Gastrocnemius medialis (tissue), 4 donors: ENCODE measurements at regions of chr2 and their contacts with region 1.

Region 1: GRCh38 chr2:135741395-135742324 is at the start of gene UBXN4:
- DNase-seq: peak; percentile 97 to 99
- ATAC-seq: peak; percentile 86 to 92
- H3K4me3 ChIP-seq: peak within 1 kb of the TSS; percentile 77 to 94 (median 93)
- H3K27ac ChIP-seq: peak within 1 kb of the TSS; percentile 92 to 100 (median 98)
- H3K4me1 ChIP-seq: peaks cover 30 to 38% of the 10 kb centered on the region in 2 donors
- H3K27me3 ChIP-seq: no peaks in the 10 kb centered on the region
- CTCF ChIP-seq: peak in 3 of 5 experiments; percentile 13 to 53 (median 30)
- POLR2A ChIP-seq: peak; percentile 94 to 96
- total RNA-seq, gene UBXN4: 54.8 to 85.1 (median 77.0) TPM

Region 2: GRCh38 chr2:134918526-134919340 is 822.9 kb before region 1 on chr2 and contains the start of gene CCNT2:
- in situ Hi-C with region 1: no loop called
- intact Hi-C with region 1: loop called (anchors 2 kb)
- DNase-seq: peak; percentile 97 to 99
- ATAC-seq: peak; percentile 86 to 89
- H3K4me3 ChIP-seq: peak within 1 kb of the TSS; percentile 96 to 99 (median 96)
- H3K27ac ChIP-seq: peak within 1 kb of the TSS; percentile 99 to 100 (median 100)
- H3K4me1 ChIP-seq: peaks cover 41 to 45% of the 10 kb centered on the region in 2 donors
- H3K27me3 ChIP-seq: no peaks in the 10 kb centered on the region
- CTCF ChIP-seq: peak in 3 of 5 experiments; percentile 22 to 34 (median 22)
- POLR2A ChIP-seq: peak; percentile 17 to 44
- total RNA-seq, gene CCNT2: 11.6 to 28.4 (median 18.6) TPM

Region 3: GRCh38 chr2:135052042-135052876 is 689.4 kb before region 1 on chr2 and contains the start of gene RAB3GAP1:
- in situ Hi-C with region 1: no loop called
- intact Hi-C with region 1: loop called (anchors 5 kb)
- DNase-seq: peak; percentile 53 to 67
- ATAC-seq: peak; percentile 89 to 91
- H3K4me3 ChIP-seq: peak within 1 kb of the TSS; percentile 84 to 92 (median 88)
- H3K27ac ChIP-seq: peak within 1 kb of the TSS; percentile 93 to 98 (median 95)
- H3K4me1 ChIP-seq: peaks cover 28 to 29% of the 10 kb centered on the region in 2 donors
- H3K27me3 ChIP-seq: no peaks in the 10 kb centered on the region
- CTCF ChIP-seq: no peak
- POLR2A ChIP-seq: peak; percentile 45 to 48
- total RNA-seq, gene RAB3GAP1: 44.3 to 51.7 (median 46.5) TPM

Region 4: GRCh38 chr2:135456431-135456830 is 285.2 kb before region 1 on chr2:
- in situ Hi-C with region 1: no loop called
- intact Hi-C with region 1: no loop called
- DNase-seq: no peak
- ATAC-seq: no peak
- H3K4me3 ChIP-seq: no peak overlapping the region
- H3K27ac ChIP-seq: no peak overlapping the region
- H3K4me1 ChIP-seq: no peaks in the 10 kb centered on the region
- H3K27me3 ChIP-seq: no peaks in the 10 kb centered on the region
- CTCF ChIP-seq: no peak
- POLR2A ChIP-seq: no peak

Region 5: DNA sequence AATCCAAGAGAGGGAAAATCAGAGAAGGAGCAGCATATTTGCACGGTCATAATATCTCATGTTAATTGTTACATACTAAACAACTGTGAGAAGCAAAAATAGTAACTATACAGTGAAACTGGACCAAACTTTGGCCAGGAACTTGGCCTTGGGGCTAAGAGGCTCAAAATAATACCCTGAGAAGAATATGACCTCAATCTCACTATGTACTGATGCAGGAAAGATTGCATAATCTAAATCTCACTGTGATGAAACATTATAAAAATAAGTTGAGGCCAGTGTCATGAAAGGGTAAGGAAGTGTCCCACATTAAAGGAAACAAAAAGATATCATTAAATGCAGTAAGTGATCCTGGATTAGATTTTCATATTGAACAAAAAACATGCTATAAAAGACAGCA is 247.2 kb before region 1 on chr2:
- in situ Hi-C with region 1: no loop called
- intact Hi-C with region 1: loop called (anchors 2 kb)
- DNase-seq: peak in 1 of 2 donors; percentile 20
- ATAC-seq: peak; percentile 97 to 99
- H3K4me3 ChIP-seq: no peak overlapping the region
- H3K27ac ChIP-seq: peak overlapping the region; percentile 80 to 89 (median 85)
- H3K4me1 ChIP-seq: peaks cover 10 to 26% of the 10 kb centered on the region in 2 donors
- H3K27me3 ChIP-seq: no peaks in the 10 kb centered on the region
- CTCF ChIP-seq: no peak
- POLR2A ChIP-seq: no peak

Region 6: GRCh38 chr2:135531231-135532228 is 210.1 kb before region 1 on chr2 and contains the start of gene R3HDM1:
- in situ Hi-C with region 1: loop called in 1 of 4 experiments (anchors 10 kb)
- intact Hi-C with region 1: loop called (anchors 2 kb)
- DNase-seq: peak; percentile 100
- ATAC-seq: peak; percentile 90 to 95
- H3K4me3 ChIP-seq: peak within 1 kb of the TSS; percentile 75 to 89 (median 80)
- H3K27ac ChIP-seq: peak within 1 kb of the TSS; percentile 83 to 98 (median 92)
- H3K4me1 ChIP-seq: peaks cover 14 to 25% of the 10 kb centered on the region in 2 donors
- H3K27me3 ChIP-seq: no peaks in the 10 kb centered on the region
- CTCF ChIP-seq: peak in 1 of 5 experiments; percentile 8
- POLR2A ChIP-seq: peak; percentile 48 to 54
- total RNA-seq, gene R3HDM1: 13.5 to 35.7 (median 19.1) TPM

Region 7: DNA sequence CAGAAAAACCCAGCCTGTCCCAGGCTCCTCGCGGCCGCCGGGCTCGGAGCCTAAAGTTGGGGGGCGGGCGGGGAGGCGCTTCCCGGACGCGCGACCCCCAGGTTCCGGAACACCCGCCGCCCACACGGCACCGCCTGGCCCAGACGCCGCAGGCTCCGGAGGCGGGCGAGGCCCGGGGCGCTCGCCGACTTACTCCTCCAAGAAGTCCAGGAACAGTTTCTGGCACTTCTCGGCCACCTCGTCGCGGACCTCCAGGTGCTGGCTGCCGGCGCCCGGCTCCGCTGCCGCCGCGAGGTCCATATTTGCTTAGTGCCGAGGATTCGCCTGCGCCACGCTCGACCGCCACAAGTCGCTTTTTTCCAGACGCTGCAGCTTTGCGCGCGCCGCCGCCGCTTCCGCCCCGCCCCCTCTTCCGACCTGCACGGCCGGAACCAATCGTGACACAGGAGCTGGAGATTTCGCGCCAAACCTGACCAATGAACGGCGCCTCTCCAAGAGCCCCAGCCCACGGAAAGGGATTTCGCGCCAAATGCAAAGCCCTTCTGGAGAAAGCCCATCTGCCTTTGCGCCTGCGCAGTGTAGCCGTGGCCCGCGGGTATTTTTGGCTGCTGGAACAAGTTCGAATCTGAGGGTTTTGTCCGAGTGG is 134.5 kb after region 1 on chr2 and contains the start of gene MCM6:
- in situ Hi-C with region 1: no loop called
- intact Hi-C with region 1: loop called (anchors 5 kb)
- DNase-seq: peak; percentile 95 to 97
- ATAC-seq: peak; percentile 98 to 100
- H3K4me3 ChIP-seq: peak within 1 kb of the TSS; percentile 74 to 93 (median 78)
- H3K27ac ChIP-seq: peak within 1 kb of the TSS; percentile 80 to 90 (median 87)
- H3K4me1 ChIP-seq: peaks cover 6 to 13% of the 10 kb centered on the region in 2 donors
- H3K27me3 ChIP-seq: no peaks in the 10 kb centered on the region
- CTCF ChIP-seq: peak in 3 of 5 experiments; percentile 10 to 46 (median 34)
- POLR2A ChIP-seq: peak; percentile 44 to 65
- total RNA-seq, gene MCM6: 4.2 to 6.3 (median 4.8) TPM

Region 8: GRCh38 chr2:135985018-135985825 is 243.6 kb after region 1 on chr2 and contains the start of gene DARS1:
- in situ Hi-C with region 1: no loop called
- intact Hi-C with region 1: loop called (anchors 5 kb)
- DNase-seq: peak; percentile 81 to 85
- ATAC-seq: peak; percentile 87 to 94
- H3K4me3 ChIP-seq: peak within 1 kb of the TSS; percentile 94 to 97 (median 96)
- H3K27ac ChIP-seq: peak within 1 kb of the TSS; percentile 95 to 99 (median 98)
- H3K4me1 ChIP-seq: peaks cover 13 to 28% of the 10 kb centered on the region in 2 donors
- H3K27me3 ChIP-seq: no peaks in the 10 kb centered on the region
- CTCF ChIP-seq: no peak
- POLR2A ChIP-seq: peak; percentile 82 to 85
- total RNA-seq, gene DARS1: 86.2 to 97.2 (median 89.8) TPM